Activated CD8-positive, alpha-beta T cell treated with anti-CD3 and anti-CD28 coated beads, Interleukin-2, amount 10 ng/mL, durations not matched to agents 7 days and 5 days (primary cell): ENCODE measurements at regions of chr1 and their contacts with region 1.

Region 1: GRCh38 chr1:153990468-153991150 is at the start of gene RPS27:
- DNase-seq: peak; percentile 94
- ATAC-seq: peak; percentile 79
- H3K4me3 Mint-ChIP-seq: peak within 1 kb of the TSS; percentile 93
- H3K27ac Mint-ChIP-seq: peak within 1 kb of the TSS; percentile 98
- H3K4me1 Mint-ChIP-seq: peaks cover 47% of the 10 kb centered on the region
- H3K27me3 Mint-ChIP-seq: no peaks in the 10 kb centered on the region
- total RNA-seq, gene RPS27: 1,866 to 2,104 TPM

Region 2: GRCh38 chr1:153572569-153573015 is 418.0 kb before region 1 on chr1:
- CTCF ChIA-PET with region 1: interaction called, 12 read pairs
- POLR2A ChIA-PET with region 1: no interaction called
- DNase-seq: peak; percentile 65
- ATAC-seq: peak; percentile 78
- H3K4me3 Mint-ChIP-seq: no peak overlapping the region
- H3K27ac Mint-ChIP-seq: no peak overlapping the region
- H3K4me1 Mint-ChIP-seq: peaks cover 33% of the 10 kb centered on the region
- H3K27me3 Mint-ChIP-seq: peaks cover 17% of the 10 kb centered on the region

Region 3: DNA sequence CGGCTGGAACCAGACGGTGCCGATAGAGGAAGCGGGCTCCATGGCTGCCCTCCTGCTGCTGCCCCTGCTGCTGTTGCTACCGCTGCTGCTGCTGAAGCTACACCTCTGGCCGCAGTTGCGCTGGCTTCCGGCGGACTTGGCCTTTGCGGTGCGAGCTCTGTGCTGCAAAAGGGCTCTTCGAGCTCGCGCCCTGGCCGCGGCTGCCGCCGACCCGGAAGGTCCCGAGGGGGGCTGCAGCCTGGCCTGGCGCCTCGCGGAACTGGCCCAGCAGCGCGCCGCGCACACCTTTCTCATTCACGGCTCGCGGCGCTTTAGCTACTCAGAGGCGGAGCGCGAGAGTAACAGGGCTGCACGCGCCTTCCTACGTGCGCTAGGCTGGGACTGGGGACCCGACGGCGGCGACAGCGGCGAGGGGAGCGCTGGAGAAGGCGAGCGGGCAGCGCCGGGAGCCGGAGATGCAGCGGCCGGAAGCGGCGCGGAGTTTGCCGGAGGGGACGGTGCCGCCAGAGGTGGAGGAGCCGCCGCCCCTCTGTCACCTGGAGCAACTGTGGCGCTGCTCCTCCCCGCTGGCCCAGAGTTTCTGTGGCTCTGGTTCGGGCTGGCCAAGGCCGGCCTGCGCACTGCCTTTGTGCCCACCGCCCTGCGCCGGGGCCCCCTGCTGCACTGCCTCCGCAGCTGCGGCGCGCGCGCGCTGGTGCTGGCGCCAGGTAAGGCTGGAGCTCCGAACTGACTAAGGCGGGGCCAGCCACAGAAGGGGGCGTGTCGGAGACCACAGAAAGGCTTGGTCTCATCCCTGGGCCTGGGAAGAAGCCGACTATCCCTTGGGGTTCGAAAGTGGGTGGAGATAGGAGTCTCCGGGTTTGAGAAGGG is 214.9 kb before region 1 on chr1:
- CTCF ChIA-PET with region 1: interaction called, 11 read pairs
- POLR2A ChIA-PET with region 1: interaction called, 5 read pairs
- DNase-seq: peak; percentile 80
- ATAC-seq: peak; percentile 74
- H3K4me3 Mint-ChIP-seq: peak overlapping the region; percentile 85
- H3K27ac Mint-ChIP-seq: peak overlapping the region; percentile 97
- H3K4me1 Mint-ChIP-seq: peaks cover 55% of the 10 kb centered on the region
- H3K27me3 Mint-ChIP-seq: no peaks in the 10 kb centered on the region

Region 4: GRCh38 chr1:153805042-153805745 is 185.4 kb before region 1 on chr1:
- CTCF ChIA-PET with region 1: interaction called, 32 read pairs
- POLR2A ChIA-PET with region 1: interaction called, 3 read pairs
- DNase-seq: peak; percentile 84
- ATAC-seq: peak; percentile 93
- H3K4me3 Mint-ChIP-seq: peak overlapping the region; percentile 7
- H3K27ac Mint-ChIP-seq: peak overlapping the region; percentile 82
- H3K4me1 Mint-ChIP-seq: peaks cover 54% of the 10 kb centered on the region
- H3K27me3 Mint-ChIP-seq: no peaks in the 10 kb centered on the region

Region 5: GRCh38 chr1:153922972-153923925 is 67.4 kb before region 1 on chr1 and contains the start of gene GATAD2B:
- CTCF ChIA-PET with region 1: interaction called, 16 read pairs
- POLR2A ChIA-PET with region 1: interaction called, 6 read pairs
- DNase-seq: peak; percentile 100
- ATAC-seq: peak; percentile 96
- H3K4me3 Mint-ChIP-seq: peak within 1 kb of the TSS; percentile 95
- H3K27ac Mint-ChIP-seq: peak within 1 kb of the TSS; percentile 96
- H3K4me1 Mint-ChIP-seq: peaks cover 38% of the 10 kb centered on the region
- H3K27me3 Mint-ChIP-seq: no peaks in the 10 kb centered on the region
- total RNA-seq, gene GATAD2B: 70.2 to 71.7 TPM

Region 6: DNA sequence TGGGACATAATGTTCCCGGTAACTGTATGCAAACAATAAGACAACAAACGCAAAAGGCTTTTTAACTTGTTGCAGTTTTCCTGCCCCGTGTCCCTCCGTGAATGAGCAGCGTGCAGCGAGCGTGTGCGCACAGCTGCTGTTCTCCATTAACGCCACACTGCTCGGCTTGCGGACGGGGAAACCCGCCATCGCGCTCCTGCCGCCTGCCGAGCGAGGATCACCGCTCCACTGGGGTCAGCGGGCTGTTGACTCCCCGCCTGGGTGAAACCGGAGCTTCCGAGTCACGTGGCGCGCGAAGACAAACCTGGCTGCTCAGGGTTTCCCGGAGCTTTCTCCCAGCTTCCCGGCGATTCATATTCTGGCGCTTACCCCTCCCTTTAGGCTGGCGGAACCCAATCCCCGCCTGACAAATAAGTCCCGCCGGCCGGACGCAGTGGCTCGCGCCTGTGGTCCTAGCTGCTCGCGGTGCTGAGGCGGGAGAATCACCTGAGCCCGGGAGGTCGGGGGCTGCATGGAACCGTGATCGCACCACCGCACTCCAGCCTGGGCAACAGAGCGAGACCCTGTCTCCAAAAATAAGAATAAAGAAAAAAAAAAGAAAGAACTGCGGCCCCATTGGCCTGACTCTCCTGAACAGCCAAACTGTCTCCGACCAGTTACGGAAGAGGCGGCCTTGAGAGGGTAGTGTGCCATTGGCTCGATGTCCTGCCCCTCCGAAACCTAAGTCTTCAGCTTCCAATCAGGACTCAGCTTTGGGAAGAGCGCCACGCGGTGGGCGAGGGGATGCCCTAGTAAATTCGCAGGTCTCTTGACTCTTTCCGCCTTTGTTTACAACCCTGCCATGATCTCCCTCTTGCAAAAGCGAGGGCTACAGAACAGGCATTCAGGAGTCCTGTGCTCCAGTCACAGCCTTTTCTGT is 23.3 kb before region 1 on chr1 and contains the start of gene CREB3L4:
- CTCF ChIA-PET with region 1: interaction called, 109 read pairs
- POLR2A ChIA-PET with region 1: interaction called, 24 read pairs
- DNase-seq: peak; percentile 91
- ATAC-seq: peak; percentile 88
- H3K4me3 Mint-ChIP-seq: peak within 1 kb of the TSS; percentile 86
- H3K27ac Mint-ChIP-seq: peak within 1 kb of the TSS; percentile 93
- H3K4me1 Mint-ChIP-seq: peaks cover 58% of the 10 kb centered on the region
- H3K27me3 Mint-ChIP-seq: no peaks in the 10 kb centered on the region
- total RNA-seq, gene CREB3L4: 5.7 to 9.0 TPM

Region 7: DNA sequence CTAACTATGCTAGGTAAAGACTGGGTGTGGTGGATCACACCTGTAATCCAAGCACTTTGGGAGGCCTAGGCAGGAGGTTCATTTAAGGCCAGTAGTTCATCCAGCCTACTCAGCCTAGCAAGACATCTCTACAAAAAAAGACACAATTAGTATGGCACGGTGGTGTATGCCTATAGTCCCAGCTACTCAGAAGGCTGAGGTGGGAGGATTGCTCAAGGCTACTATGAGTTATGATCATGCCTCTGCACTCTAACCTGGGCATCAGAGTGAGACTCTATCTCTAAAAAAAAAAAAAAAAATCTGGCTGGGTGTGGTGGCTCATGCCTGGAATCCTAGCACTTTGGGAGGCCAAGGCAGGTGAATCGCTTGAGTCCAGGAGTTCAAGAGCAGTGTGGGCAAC is 142.6 kb after region 1 on chr1:
- CTCF ChIA-PET with region 1: no interaction called
- POLR2A ChIA-PET with region 1: no interaction called
- DNase-seq: no peak
- ATAC-seq: no peak
- H3K4me3 Mint-ChIP-seq: no peak overlapping the region
- H3K27ac Mint-ChIP-seq: no peak overlapping the region
- H3K4me1 Mint-ChIP-seq: peaks cover 7% of the 10 kb centered on the region
- H3K27me3 Mint-ChIP-seq: no peaks in the 10 kb centered on the region